Calu3 (cell line): ENCODE measurements at regions of chr16 and their contacts with region 1.

Region 1: GRCh38 chr16:31696968-31697743 is 169.5 kb downstream of the AHSP start:
- DNase-seq: no peak
- H3K4me3 Mint-ChIP-seq: no peak overlapping the region
- H3K27ac Mint-ChIP-seq: no peak overlapping the region
- H3K4me1 Mint-ChIP-seq: peaks cover 11% of the 10 kb centered on the region
- H3K27me3 Mint-ChIP-seq: no peaks in the 10 kb centered on the region
- CTCF ChIP-seq: peak; percentile 27

Region 2: GRCh38 chr16:31458844-31459721 is 238.1 kb before region 1 on chr16 and contains the start of gene ARMC5:
- CTCF ChIA-PET with region 1: interaction called, 3 read pairs
- intact Hi-C with region 1: loop called (anchors 10 kb)
- DNase-seq: peak; percentile 97
- H3K4me3 Mint-ChIP-seq: peak within 1 kb of the TSS; percentile 86
- H3K27ac Mint-ChIP-seq: peak within 1 kb of the TSS; percentile 93
- H3K4me1 Mint-ChIP-seq: peaks cover 18% of the 10 kb centered on the region
- H3K27me3 Mint-ChIP-seq: no peaks in the 10 kb centered on the region
- CTCF ChIP-seq: peak; percentile 58
- total RNA-seq, gene ARMC5: 13.2 and 13.6 TPM in 2 replicates